ENCODE measurements at regions of chr6 and their contacts with region 1.

Region 1: DNA sequence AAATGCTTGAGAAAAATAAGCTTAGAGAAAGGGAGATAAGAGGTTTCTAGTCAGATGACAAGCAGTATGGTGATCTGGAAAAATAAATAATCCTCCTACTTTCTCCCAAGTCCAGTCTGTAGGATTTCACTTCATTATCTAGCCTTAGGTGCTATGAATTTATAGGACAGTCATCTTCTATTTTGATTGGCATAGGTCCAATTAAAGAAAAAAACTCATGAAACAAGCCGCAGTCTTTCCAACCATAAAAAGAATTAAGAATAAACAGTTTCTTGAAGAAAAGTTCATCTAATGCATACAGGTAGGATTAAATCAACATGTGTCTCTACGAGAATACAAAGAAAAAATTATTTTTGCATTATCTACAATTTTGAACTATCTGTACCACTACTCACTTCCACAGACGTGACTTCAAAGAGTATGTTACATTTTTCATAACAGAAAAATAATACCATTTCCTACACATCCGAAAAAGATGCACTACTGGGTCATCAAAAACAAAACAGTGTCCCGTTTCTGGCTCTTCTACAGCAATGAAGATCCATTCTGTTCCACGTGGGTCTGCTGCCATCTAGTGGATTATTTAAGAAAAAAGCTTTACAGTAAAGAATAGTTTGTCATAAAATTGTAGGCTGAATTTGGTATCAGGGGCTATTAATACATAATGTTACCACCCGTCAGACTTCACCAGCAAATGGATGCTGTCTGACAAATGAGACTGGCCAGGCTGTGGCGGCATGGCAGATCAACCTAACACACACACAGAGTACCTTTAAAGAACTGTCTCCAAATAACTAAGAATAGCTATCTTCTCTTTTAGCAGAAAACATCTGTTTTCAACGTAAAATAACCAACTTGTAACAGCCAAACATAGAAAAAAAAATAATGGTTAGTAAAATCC is 28.9 kb downstream of the STX7 start:
- DNase-seq: peak; percentile 47
- ATAC-seq: peak; percentile 76
- H3K4me3 ChIP-seq: no peak overlapping the region
- H3K27ac ChIP-seq: no peak overlapping the region
- H3K4me1 ChIP-seq: no peaks in the 10 kb centered on the region
- H3K27me3 ChIP-seq: no peaks in the 10 kb centered on the region
- CTCF ChIP-seq: peak; percentile 47 to 86 (median 80)
- POLR2A ChIP-seq: no peak
- RAD21 ChIP-seq: peak; percentile 82

Region 2: GRCh38 chr6:132391391-132392271 is 92.4 kb before region 1 on chr6:
- CTCF ChIA-PET with region 1: interaction called, 3 read pairs
- POLR2A ChIA-PET with region 1: no interaction called
- RAD21 ChIA-PET with region 1: no interaction called
- intact Hi-C with region 1: loop called (anchors 5 kb)
- DNase-seq: no peak
- ATAC-seq: no peak
- H3K4me3 ChIP-seq: no peak overlapping the region
- H3K27ac ChIP-seq: no peak overlapping the region
- H3K4me1 ChIP-seq: no peaks in the 10 kb centered on the region
- H3K27me3 ChIP-seq: no peaks in the 10 kb centered on the region
- CTCF ChIP-seq: no peak
- POLR2A ChIP-seq: no peak
- RAD21 ChIP-seq: no peak

Measured in HCT116 (cell line).